Activated CD8-positive, alpha-beta T cell treated with anti-CD3 and anti-CD28 coated beads for 36 hours (primary cell): ENCODE measurements at regions of chr17 and their contacts with region 1.

Region 1: GRCh38 chr17:50026901-50027630 is 28.8 kb upstream of the ITGA3 start:
- DNase-seq: peak; percentile 87
- ATAC-seq: peak; percentile 86
- H3K4me3 Mint-ChIP-seq: no peak overlapping the region
- H3K27ac Mint-ChIP-seq: no peak overlapping the region
- H3K4me1 Mint-ChIP-seq: peaks cover 12% of the 10 kb centered on the region
- H3K27me3 Mint-ChIP-seq: peaks cover 24% of the 10 kb centered on the region
- CTCF ChIP-seq: peak; percentile 97

Region 2: DNA sequence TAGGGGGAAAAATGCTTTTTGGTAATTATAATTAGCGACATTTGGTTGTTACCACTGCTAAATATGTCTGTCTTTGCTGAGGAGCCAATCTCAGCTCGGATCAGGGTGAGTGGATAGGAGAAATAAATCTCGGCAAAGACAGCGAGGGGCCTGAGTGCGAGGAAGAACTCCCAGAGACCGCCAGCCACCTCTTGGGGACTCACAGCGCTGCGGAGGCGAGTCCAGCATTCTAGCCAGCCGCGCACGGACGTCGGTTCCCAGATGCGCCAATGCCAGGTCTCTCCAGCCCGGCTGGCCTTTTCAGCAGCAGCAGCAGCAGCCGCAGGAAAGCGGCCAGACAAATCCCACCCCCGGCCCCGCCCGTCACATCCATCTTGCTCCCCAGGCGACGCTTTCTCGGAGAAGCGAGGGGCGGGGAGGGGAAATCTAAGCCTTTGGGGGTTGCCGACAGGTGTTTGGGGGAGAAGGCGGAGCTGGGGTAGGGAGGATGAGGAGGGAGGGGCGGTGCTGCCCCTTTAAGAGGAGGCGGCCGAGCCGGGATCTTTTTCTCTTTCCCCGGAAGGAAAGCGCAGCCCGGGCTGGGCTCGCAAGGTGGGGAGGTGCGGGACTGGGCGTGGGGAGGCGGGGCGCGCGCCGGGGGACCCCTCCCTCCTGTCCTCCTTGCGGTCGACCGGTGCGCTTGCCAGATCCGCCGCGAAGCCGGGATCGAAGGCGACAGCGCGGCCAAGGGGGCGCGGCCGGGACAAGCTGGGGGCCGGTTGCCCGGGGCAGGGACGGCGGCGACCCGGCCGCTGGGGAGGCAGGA is 28.6 kb after region 1 on chr17 and contains the start of gene ITGA3:
- CTCF ChIA-PET with region 1: interaction called, 62 read pairs
- POLR2A ChIA-PET with region 1: no interaction called
- intact Hi-C with region 1: no loop called
- DNase-seq: peak; percentile 68
- ATAC-seq: peak; percentile 45
- H3K4me3 Mint-ChIP-seq: peak within 1 kb of the TSS; percentile 82
- H3K27ac Mint-ChIP-seq: peak within 1 kb of the TSS; percentile 14
- H3K4me1 Mint-ChIP-seq: peaks cover 21% of the 10 kb centered on the region
- H3K27me3 Mint-ChIP-seq: peaks cover 3% of the 10 kb centered on the region
- CTCF ChIP-seq: no peak
- total RNA-seq, gene ITGA3: 4.2 to 7.2 TPM